Psoas muscle (tissue), 8 donors: ENCODE measurements at regions of chr4 and their contacts with region 1.

Region 1: GRCh38 chr4:25144870-25145481 is 15.3 kb downstream of the SEPSECS start:
- DNase-seq: no peak
- ATAC-seq: no peak
- H3K4me3 ChIP-seq: no peak overlapping the region
- H3K27ac ChIP-seq: no peak overlapping the region
- H3K4me1 ChIP-seq: no peaks in the 10 kb centered on the region
- H3K27me3 ChIP-seq: no peaks in the 10 kb centered on the region
- CTCF ChIP-seq: peak; percentile 50

Region 2: GRCh38 chr4:24472514-24473308 is 672.3 kb before region 1 on chr4:
- intact Hi-C with region 1: loop called in 1 of 2 experiments (anchors 10 kb)
- DNase-seq: peak; percentile 86 to 94
- ATAC-seq: peak; percentile 88 to 93 (median 91)
- H3K4me3 ChIP-seq: peak overlapping the region; percentile 79
- H3K27ac ChIP-seq: peak overlapping the region; percentile 55
- H3K4me1 ChIP-seq: peaks cover 15% of the 10 kb centered on the region
- H3K27me3 ChIP-seq: peaks cover 0 to 10% (median 0%) of the 10 kb centered on the region in 3 donors
- CTCF ChIP-seq: peak; percentile 78

Region 3: DNA sequence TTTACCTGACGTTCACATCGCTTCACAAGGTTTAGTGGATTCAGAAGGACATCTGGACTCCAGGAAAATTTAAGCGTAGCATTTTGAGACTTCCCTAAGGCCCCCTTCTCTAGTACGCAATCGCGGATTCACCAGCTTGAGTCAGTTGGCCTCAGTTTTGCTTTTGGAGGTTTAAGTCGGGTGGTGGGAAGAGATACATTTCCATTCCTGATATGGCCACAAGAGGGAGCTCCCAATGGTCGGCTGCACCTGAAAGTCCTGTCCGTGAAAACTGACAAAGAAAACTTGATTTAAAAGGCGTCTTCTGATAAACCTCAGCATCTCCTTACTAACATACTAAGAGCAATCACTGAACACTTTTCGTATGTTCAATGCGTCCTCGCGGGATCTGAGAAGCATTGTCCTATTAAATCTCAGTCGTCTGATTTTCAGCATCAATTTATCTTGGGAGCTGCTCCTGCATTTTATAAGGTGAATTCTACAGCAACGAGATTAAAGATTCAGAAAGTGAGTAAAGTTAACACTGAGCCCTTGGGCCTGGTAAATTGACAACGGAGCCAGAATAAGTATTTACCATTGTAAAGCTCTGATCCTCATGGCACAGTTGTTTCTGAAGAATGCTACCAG is 164.8 kb before region 1 on chr4:
- intact Hi-C with region 1: loop called in 1 of 2 experiments (anchors 2 kb)
- DNase-seq: peak; percentile 35 to 56
- ATAC-seq: peak; percentile 48 to 86 (median 70)
- H3K4me3 ChIP-seq: peak overlapping the region; percentile 59
- H3K27ac ChIP-seq: peak overlapping the region; percentile 78
- H3K4me1 ChIP-seq: peaks cover 9% of the 10 kb centered on the region
- H3K27me3 ChIP-seq: no peaks in the 10 kb centered on the region
- CTCF ChIP-seq: peak; percentile 83

Region 4: DNA sequence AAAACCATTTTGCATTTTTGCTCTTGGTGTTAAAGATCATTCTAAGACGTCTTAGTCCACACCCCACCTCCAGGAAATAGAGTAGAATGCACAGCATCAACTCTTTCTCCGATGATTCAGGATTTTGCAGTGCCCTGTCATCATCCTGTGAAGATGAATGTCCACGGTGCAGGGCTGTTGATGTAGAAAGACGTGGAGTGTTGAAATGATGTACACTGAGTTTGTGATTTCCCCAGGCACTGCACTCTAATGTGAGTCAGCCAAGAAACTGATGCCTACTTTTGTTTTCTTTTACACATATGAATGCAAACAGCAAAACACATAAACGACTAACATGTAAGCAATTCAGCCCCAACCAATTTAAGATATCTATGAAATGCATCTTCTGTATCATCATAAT is 124.7 kb before region 1 on chr4:
- intact Hi-C with region 1: no loop called
- DNase-seq: no peak
- ATAC-seq: no peak
- H3K4me3 ChIP-seq: no peak overlapping the region
- H3K27ac ChIP-seq: no peak overlapping the region
- H3K4me1 ChIP-seq: peaks cover 3% of the 10 kb centered on the region
- H3K27me3 ChIP-seq: peaks cover 0 to 4% (median 0%) of the 10 kb centered on the region in 3 donors
- CTCF ChIP-seq: no peak

Region 5: DNA sequence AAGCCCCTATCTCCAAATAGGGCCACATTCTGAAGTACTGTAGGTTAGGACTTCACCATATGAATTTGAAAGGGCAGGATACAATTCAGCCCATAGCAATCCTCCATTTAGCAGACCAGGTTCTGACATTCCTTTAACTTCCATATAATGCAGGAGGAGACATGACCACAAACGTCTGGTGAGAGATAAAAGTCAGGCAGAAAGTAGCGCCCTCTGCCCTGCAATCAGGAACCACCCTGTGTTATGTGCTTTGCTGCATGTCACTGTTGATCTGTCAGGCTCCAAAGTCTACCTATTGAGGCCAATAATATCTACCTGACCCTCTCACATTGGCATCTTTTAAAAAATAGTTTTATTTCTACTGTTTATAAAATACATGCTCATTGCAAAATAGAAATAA is 45.4 kb after region 1 on chr4:
- intact Hi-C with region 1: no loop called
- DNase-seq: no peak
- ATAC-seq: no peak
- H3K4me3 ChIP-seq: no peak overlapping the region
- H3K27ac ChIP-seq: no peak overlapping the region
- H3K4me1 ChIP-seq: no peaks in the 10 kb centered on the region
- H3K27me3 ChIP-seq: no peaks in the 10 kb centered on the region
- CTCF ChIP-seq: no peak

Region 6: GRCh38 chr4:25246680-25247611 is 102.0 kb after region 1 on chr4:
- intact Hi-C with region 1: no loop called
- DNase-seq: no peak
- ATAC-seq: no peak
- H3K4me3 ChIP-seq: no peak overlapping the region
- H3K27ac ChIP-seq: no peak overlapping the region
- H3K4me1 ChIP-seq: no peaks in the 10 kb centered on the region
- H3K27me3 ChIP-seq: no peaks in the 10 kb centered on the region
- CTCF ChIP-seq: no peak